Aorta (tissue), 5 donors: ENCODE measurements at regions of chr5 and their contacts with region 1.

Region 1: DNA sequence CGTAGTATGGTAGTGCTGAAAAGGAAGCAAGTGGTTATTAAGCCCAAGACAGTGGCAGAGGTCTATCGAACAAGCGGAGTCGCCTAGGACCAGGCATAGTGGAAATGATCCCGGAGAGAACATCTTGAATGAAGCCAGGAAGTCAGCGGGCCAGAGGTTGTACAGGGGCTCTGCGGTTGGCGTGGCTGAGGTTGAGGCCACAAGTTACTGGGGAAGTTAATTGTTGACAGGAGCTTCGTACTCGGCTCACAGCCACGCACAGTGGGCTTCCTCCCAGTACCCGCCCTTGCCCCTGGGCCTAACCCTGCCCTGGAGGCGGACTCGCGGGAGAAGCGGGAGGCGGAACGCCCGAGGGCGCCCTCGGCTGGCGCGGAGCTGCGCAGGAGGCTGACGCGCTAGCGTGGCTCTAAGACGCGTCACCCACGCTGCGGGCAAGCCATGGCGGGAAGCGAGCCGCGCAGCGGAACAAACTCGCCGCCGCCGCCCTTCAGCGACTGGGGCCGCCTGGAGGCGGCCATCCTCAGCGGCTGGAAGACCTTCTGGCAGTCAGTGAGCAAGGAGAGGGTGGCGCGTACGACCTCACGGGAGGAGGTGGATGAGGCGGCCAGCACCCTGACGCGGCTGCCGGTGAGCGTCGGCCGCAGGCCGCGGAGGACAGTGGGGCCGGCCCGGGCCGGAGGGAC is at the start of gene FBXO4:
- DNase-seq: peak; percentile 94 to 96
- ATAC-seq: peak; percentile 99
- H3K4me3 ChIP-seq: peak within 1 kb of the TSS; percentile 74 to 86
- H3K27ac ChIP-seq: peak within 1 kb of the TSS; percentile 51 to 99
- H3K4me1 ChIP-seq: no peaks in the 10 kb centered on the region
- H3K27me3 ChIP-seq: no peaks in the 10 kb centered on the region
- total RNA-seq, gene FBXO4: 10.2 to 11.5 TPM

Region 2: GRCh38 chr5:42057254-42057690 is 132.3 kb after region 1 on chr5:
- intact Hi-C with region 1: loop called in 1 of 2 experiments (anchors 10 kb)
- DNase-seq: peak in 1 of 2 donors; percentile 73
- ATAC-seq: peak; percentile 48
- H3K4me3 ChIP-seq: no peak overlapping the region
- H3K27ac ChIP-seq: no peak overlapping the region
- H3K4me1 ChIP-seq: no peaks in the 10 kb centered on the region
- H3K27me3 ChIP-seq: no peaks in the 10 kb centered on the region